MCF 10A (cell line): ENCODE measurements at regions of chr13 and their contacts with region 1.

Region 1: DNA sequence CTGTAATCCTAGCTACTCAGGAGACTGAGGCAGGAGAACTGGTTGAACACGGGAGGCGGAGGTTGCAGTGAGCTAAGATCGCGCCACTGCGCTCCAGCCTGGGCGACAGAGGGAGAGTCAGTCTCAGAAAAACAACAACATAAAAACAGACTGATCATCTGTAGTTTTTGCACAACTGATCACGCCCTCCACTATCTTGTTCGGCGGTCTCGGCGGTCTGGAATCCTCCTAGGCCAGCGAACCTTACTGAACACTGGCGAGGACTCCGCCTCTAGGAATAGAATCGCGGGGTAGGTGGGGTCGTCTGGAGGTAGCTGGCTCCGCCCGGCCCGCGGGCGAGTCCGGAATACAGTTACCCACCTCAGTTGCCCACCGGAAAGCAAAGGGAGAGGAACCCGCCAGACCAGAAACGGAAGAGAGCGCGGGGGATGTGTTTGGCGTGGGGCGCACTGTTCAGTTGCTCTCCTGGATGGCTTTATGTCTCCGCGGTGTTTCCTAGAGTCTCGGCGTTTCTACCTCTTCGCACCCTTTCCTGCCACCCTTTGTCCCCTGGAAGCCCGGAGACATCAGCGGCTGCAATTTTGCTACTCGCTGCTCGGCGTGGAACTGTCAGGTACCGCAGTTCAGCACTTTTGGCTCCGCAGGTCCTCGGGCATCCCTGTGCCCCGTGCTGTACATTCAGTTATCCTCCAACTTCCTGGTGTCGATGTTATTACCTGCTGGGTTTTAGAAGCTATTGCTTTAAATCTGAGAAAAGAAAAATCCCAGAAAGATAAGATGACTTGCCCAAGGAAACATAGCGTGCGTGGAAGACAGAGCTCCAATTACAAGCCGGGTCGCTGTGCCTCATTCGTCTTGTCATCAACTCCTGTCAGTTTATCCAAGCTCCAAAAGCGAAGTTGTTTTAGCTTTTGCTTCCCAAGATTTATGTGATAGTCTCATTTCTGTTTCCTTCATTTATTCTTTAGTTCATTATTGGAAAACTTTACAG is 24.9 kb upstream of the HNRNPA1L2 start:
- DNase-seq: peak; percentile 85
- H3K4me3 Mint-ChIP-seq: peak overlapping the region; percentile 98
- H3K27ac Mint-ChIP-seq: peak overlapping the region; percentile 88
- H3K4me1 Mint-ChIP-seq: peaks cover 11% of the 10 kb centered on the region
- H3K27me3 Mint-ChIP-seq: no peaks in the 10 kb centered on the region
- CTCF ChIP-seq: no peak

Region 2: GRCh38 chr13:52356327-52356726 is 261.0 kb before region 1 on chr13:
- CTCF ChIA-PET with region 1: no interaction called
- POLR2A ChIA-PET with region 1: no interaction called
- intact Hi-C with region 1: no loop called
- DNase-seq: peak; percentile 83
- H3K4me3 Mint-ChIP-seq: no peak overlapping the region
- H3K27ac Mint-ChIP-seq: no peak overlapping the region
- H3K4me1 Mint-ChIP-seq: peaks cover 19% of the 10 kb centered on the region
- H3K27me3 Mint-ChIP-seq: no peaks in the 10 kb centered on the region
- CTCF ChIP-seq: no peak

Region 3: DNA sequence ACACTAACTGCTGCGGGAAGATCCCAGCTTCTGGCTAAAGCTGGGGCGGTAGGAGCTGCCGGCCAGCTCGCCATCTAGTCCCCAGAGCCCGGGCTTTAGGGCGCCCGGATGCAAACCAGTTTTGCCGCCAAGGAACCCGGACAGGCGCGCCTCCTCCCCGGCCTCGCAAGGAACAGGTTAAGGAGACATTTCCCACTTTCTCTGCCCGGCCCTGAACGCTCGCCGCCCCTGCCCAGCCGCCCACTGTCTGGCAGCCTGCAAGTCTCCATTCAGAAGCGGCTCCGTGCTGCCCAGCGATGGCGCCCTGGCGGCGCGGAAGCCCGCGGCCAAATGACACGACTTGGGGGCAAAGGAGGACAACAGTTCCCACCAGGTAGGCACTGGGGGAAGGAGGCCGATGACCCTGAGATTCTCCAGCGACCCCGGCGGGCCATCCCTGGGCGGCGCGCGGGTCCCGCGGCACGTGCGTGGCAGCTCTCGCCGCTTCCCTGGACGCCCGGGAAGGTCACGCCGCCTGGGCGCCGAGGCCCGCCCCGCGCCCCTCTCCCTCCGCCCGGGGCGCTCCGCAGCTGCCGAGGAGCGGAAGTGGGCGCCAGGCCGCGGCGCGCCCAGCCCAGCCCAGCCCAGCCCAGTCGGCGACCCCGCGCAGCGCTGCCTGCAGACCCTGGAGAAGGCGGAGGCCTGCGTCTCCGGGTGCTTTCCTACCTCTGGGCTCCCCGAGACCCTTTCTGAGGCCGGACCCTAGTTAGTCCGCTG is 17.3 kb before region 1 on chr13:
- CTCF ChIA-PET with region 1: interaction called, 3 read pairs
- POLR2A ChIA-PET with region 1: interaction called, 36 read pairs
- intact Hi-C with region 1: no loop called
- DNase-seq: peak; percentile 44
- H3K4me3 Mint-ChIP-seq: peak overlapping the region; percentile 78
- H3K27ac Mint-ChIP-seq: peak overlapping the region; percentile 96
- H3K4me1 Mint-ChIP-seq: peaks cover 17% of the 10 kb centered on the region
- H3K27me3 Mint-ChIP-seq: no peaks in the 10 kb centered on the region
- CTCF ChIP-seq: no peak

Region 4: DNA sequence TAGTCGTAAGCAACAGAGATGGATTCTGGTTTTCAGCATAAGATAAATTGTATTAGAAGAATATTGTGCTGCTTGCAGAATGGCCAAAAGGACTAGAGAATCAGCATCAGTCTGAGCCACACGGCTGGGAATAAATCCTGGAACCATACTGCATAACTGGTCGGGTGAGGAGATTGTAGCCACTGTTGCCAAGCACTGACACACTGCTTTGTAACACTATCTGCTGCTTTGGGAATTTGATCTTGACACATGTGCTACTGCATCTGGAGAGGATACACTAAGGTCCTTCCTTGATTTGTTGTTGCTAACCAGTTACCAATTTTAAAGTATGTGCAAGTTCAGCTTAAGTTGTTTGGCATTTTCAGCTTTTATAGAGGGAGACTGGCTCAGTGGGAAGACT is 26.7 kb after region 1 on chr13:
- CTCF ChIA-PET with region 1: interaction called, 6 read pairs
- POLR2A ChIA-PET with region 1: interaction called, 11 read pairs
- intact Hi-C with region 1: no loop called
- DNase-seq: no peak
- H3K4me3 Mint-ChIP-seq: no peak overlapping the region
- H3K27ac Mint-ChIP-seq: no peak overlapping the region
- H3K4me1 Mint-ChIP-seq: peaks cover 7% of the 10 kb centered on the region
- H3K27me3 Mint-ChIP-seq: no peaks in the 10 kb centered on the region
- CTCF ChIP-seq: no peak